Activated T-helper 1 cell treated with anti-CD3 and anti-CD28 coated beads, Interleukin-12 subunit alpha, Interleukin-12 subunit beta, Interleukin-2, Interleukin-4 antibody, amounts not matched to agents 30 ng/mL and 10 ng/mL and 1 ng/mL, durations not matched to agents 14 hours and 24 hours and 36 hours (primary cell): ENCODE measurements at regions of chr2 and their contacts with region 1.

Region 1: GRCh38 chr2:216108967-216109921 is at the start of gene XRCC5:
- DNase-seq: peak; percentile 95
- H3K4me3 Mint-ChIP-seq: peak within 1 kb of the TSS; percentile 99
- H3K27ac Mint-ChIP-seq: peak within 1 kb of the TSS; percentile 98
- H3K4me1 Mint-ChIP-seq: peaks cover 48% of the 10 kb centered on the region
- H3K27me3 Mint-ChIP-seq: no peaks in the 10 kb centered on the region
- total RNA-seq, gene XRCC5: 430 and 484 TPM in 2 replicates

Region 2: GRCh38 chr2:216081487-216082116 is 27.6 kb before region 1 on chr2 and contains the starts of genes PECR and TMEM169:
- intact Hi-C with region 1: loop called (anchors 1 kb)
- DNase-seq: peak; percentile 74
- H3K4me3 Mint-ChIP-seq: peak within 1 kb of the TSS; percentile 99
- H3K27ac Mint-ChIP-seq: peak within 1 kb of the TSS; percentile 84
- H3K4me1 Mint-ChIP-seq: peaks cover 49% of the 10 kb centered on the region
- H3K27me3 Mint-ChIP-seq: no peaks in the 10 kb centered on the region
- total RNA-seq, gene PECR: 14.0 and 17.6 TPM in 2 replicates
- total RNA-seq, gene TMEM169: 0.93 and 2.2 TPM in 2 replicates

Region 3: DNA sequence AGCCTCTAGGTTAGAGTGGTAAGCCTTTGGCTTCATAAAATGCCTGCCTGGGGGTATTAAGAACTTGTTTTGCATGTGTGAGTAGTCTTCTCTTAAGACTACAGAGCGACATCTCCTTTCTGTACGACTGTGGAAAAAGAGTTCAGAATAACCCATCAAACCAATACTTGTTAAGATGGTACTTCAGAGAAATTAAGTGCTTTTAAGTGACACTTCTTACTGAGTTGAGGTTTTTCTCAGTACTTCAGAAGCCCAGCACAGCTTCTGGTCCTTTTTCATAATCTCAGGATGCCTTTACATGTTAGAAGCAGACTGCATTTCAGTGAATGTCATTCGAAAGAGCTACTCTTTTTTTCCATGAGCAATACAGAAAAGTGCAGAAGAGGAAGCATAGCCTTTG is 10.7 kb after region 1 on chr2:
- intact Hi-C with region 1: loop called (anchors 1 kb)
- DNase-seq: no peak
- H3K4me3 Mint-ChIP-seq: peak overlapping the region; percentile 78
- H3K27ac Mint-ChIP-seq: peak overlapping the region; percentile 95
- H3K4me1 Mint-ChIP-seq: peaks cover 78% of the 10 kb centered on the region
- H3K27me3 Mint-ChIP-seq: no peaks in the 10 kb centered on the region

Region 4: GRCh38 chr2:216139884-216140283 is 30.6 kb after region 1 on chr2:
- intact Hi-C with region 1: loop called (anchors 1 kb)
- DNase-seq: no peak
- H3K4me3 Mint-ChIP-seq: no peak overlapping the region
- H3K27ac Mint-ChIP-seq: peak overlapping the region; percentile 31
- H3K4me1 Mint-ChIP-seq: peaks cover 49% of the 10 kb centered on the region
- H3K27me3 Mint-ChIP-seq: no peaks in the 10 kb centered on the region

Region 5: DNA sequence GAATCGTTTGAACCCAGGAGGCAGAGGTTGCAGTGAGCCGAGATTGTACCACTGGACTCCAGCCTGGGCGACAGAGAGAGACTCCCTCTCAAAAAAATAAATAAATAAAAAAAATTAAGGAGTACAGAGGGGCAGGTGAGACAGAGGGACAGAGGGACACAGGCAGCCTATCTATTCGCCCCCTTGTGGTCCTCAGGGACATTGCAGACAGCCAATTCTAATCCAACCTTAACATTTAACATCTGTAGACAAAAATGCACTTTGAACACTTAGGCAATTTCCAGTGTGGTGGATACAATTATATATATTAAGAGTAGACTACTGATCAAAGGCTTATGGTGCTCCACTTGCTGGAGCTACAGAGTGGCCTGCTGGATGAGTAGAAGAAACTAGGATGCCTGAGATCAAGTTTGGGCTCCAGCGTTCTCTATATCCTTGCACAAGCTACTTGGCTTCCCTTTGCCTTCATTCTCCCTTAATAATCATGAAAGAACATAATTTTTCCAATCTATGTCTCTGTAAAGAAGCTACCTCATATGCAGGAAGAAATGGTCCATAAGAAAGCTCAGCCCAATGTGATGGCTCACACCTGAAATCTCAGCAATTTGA is 294.9 kb after region 1 on chr2:
- intact Hi-C with region 1: loop called (anchors 1 kb)
- DNase-seq: peak; percentile 9
- H3K4me3 Mint-ChIP-seq: no peak overlapping the region
- H3K27ac Mint-ChIP-seq: no peak overlapping the region
- H3K4me1 Mint-ChIP-seq: no peaks in the 10 kb centered on the region
- H3K27me3 Mint-ChIP-seq: peaks cover 15% of the 10 kb centered on the region

Region 6: GRCh38 chr2:216498418-216499413 is 389.5 kb after region 1 on chr2 and contains the start of gene RPL37A:
- intact Hi-C with region 1: loop called (anchors 1 kb)
- DNase-seq: peak; percentile 87
- H3K4me3 Mint-ChIP-seq: peak within 1 kb of the TSS; percentile 93
- H3K27ac Mint-ChIP-seq: peak within 1 kb of the TSS; percentile 86
- H3K4me1 Mint-ChIP-seq: peaks cover 57% of the 10 kb centered on the region
- H3K27me3 Mint-ChIP-seq: no peaks in the 10 kb centered on the region
- total RNA-seq, gene RPL37A: 2,803 and 2,922 TPM in 2 replicates